Right ventricle myocardium superior (tissue), 1 donor: ENCODE measurements at regions of chr1 and their contacts with region 1.

Region 1: GRCh38 chr1:93814059-93814794 is 64.8 kb downstream of the DNTTIP2 start:
- DNase-seq: no peak
- ATAC-seq: peak; percentile 90

Region 2: GRCh38 chr1:93437976-93438605 is 376.1 kb before region 1 on chr1:
- intact Hi-C with region 1: loop called (anchors 10 kb)
- DNase-seq: no peak
- ATAC-seq: peak; percentile 73

Region 3: GRCh38 chr1:93591676-93592550 is 222.3 kb before region 1 on chr1:
- intact Hi-C with region 1: no loop called
- DNase-seq: no peak
- ATAC-seq: peak; percentile 13

Region 4: DNA sequence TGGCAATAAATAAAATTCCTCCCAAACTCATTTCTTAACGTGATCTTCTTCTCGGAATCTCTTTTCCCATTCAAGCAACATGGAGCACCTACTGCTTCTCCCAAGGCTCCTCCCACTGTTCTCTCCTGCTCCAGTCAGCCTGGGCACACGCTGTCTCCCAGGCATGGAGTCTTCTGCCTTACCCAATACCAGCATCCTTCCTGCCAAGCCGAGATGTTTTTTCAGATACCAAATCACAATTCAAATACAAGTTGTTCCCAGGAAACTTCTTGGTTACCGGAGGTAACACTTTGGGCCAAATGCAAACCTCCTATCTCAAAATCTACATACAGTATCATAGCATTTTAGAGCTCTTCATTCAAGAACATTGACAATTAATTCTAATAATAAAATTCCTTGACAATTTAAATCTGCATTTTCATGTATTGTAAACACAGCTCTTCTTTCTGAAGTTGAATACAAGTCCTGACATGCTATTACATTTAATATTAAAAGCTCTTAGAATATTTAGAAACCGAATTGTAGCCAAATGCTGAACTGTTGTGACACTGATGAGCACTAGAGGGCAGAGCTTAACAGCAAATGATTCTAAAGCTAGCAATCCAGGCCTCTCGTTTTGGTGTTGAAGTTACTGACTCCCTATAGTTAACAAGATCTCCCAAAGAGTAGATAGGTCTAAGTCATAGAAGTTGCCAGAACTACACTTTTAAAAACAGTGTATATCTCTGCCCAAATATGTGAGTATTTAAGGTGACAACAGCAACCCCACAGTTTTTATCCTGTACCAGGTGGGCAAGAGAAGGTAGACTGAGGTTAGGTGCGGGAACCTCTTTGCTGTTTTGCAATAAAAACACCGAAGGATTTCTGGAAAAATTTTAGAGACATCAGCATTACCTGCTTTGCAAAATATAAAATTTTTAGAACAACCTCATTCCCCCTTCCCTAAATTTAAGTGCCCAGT is 184.8 kb before region 1 on chr1:
- intact Hi-C with region 1: loop called (anchors 2 kb)
- DNase-seq: no peak
- ATAC-seq: peak; percentile 74

Region 5: GRCh38 chr1:93722081-93723031 is 91.9 kb before region 1 on chr1:
- intact Hi-C with region 1: loop called (anchors 10 kb)
- DNase-seq: peak; percentile 76
- ATAC-seq: peak; percentile 82